Naive thymus-derived CD4-positive, alpha-beta T cell (primary cell): ENCODE measurements at regions of chr7 and their contacts with region 1.

Region 1: GRCh38 chr7:39987476-39988347 is 37.7 kb downstream of the CDK13 start:
- DNase-seq: peak in 7 of 9 donors; percentile 62 to 83 (median 76)
- ATAC-seq: peak; percentile 86
- H3K4me3 ChIP-seq: no peak overlapping the region
- H3K4me3 Mint-ChIP-seq: peak overlapping the region in 9 of 10 donors; percentile 19 to 68 (median 49)
- H3K27ac ChIP-seq: peak overlapping the region; percentile 46
- H3K27ac Mint-ChIP-seq: peak overlapping the region; percentile 15 to 93 (median 84)
- H3K4me1 ChIP-seq: peaks cover 4 to 28% of the 10 kb centered on the region in 2 donors
- H3K4me1 Mint-ChIP-seq: peaks cover 33 to 75% (median 56%) of the 10 kb centered on the region in 7 donors
- H3K27me3 ChIP-seq: no peaks in the 10 kb centered on the region
- H3K27me3 Mint-ChIP-seq: no peaks in the 10 kb centered on the region

Region 2: GRCh38 chr7:39433550-39433949 is 554.2 kb before region 1 on chr7:
- CTCF ChIA-PET with region 1: no interaction called
- POLR2A ChIA-PET with region 1: no interaction called
- intact Hi-C with region 1: no loop called
- DNase-seq: no peak
- ATAC-seq: no peak
- H3K4me3 ChIP-seq: no peak overlapping the region
- H3K4me3 Mint-ChIP-seq: no peak overlapping the region
- H3K27ac ChIP-seq: no peak overlapping the region
- H3K27ac Mint-ChIP-seq: no peak overlapping the region
- H3K4me1 ChIP-seq: no peaks in the 10 kb centered on the region
- H3K4me1 Mint-ChIP-seq: peaks cover 0 to 1% (median 0%) of the 10 kb centered on the region in 7 donors
- H3K27me3 ChIP-seq: no peaks in the 10 kb centered on the region
- H3K27me3 Mint-ChIP-seq: peaks cover 0 to 9% (median 4%) of the 10 kb centered on the region in 5 donors

Region 3: GRCh38 chr7:39700932-39701331 is 286.8 kb before region 1 on chr7:
- CTCF ChIA-PET with region 1: no interaction called
- POLR2A ChIA-PET with region 1: no interaction called
- intact Hi-C with region 1: no loop called
- DNase-seq: no peak
- ATAC-seq: peak; percentile 54
- H3K4me3 ChIP-seq: no peak overlapping the region
- H3K4me3 Mint-ChIP-seq: no peak overlapping the region
- H3K27ac ChIP-seq: no peak overlapping the region
- H3K27ac Mint-ChIP-seq: peak overlapping the region in 3 of 9 donors; percentile 3 to 63 (median 33)
- H3K4me1 ChIP-seq: no peaks in the 10 kb centered on the region
- H3K4me1 Mint-ChIP-seq: peaks cover 0 to 4% (median 0%) of the 10 kb centered on the region in 7 donors
- H3K27me3 ChIP-seq: no peaks in the 10 kb centered on the region
- H3K27me3 Mint-ChIP-seq: no peaks in the 10 kb centered on the region

Region 4: GRCh38 chr7:39894904-39895303 is 92.8 kb before region 1 on chr7:
- CTCF ChIA-PET with region 1: interaction called, 5 read pairs
- POLR2A ChIA-PET with region 1: no interaction called
- intact Hi-C with region 1: loop called in 1 of 2 experiments (anchors 1 kb)
- DNase-seq: no peak
- ATAC-seq: no peak
- H3K4me3 ChIP-seq: no peak overlapping the region
- H3K4me3 Mint-ChIP-seq: no peak overlapping the region
- H3K27ac ChIP-seq: no peak overlapping the region
- H3K27ac Mint-ChIP-seq: no peak overlapping the region
- H3K4me1 ChIP-seq: no peaks in the 10 kb centered on the region
- H3K4me1 Mint-ChIP-seq: peaks cover 0 to 3% (median 0%) of the 10 kb centered on the region in 7 donors
- H3K27me3 ChIP-seq: no peaks in the 10 kb centered on the region
- H3K27me3 Mint-ChIP-seq: peaks cover 0 to 15% (median 4%) of the 10 kb centered on the region in 5 donors